AG04449 (cell line): ENCODE measurements at regions of chr4 and their contacts with region 1.

Region 1: DNA sequence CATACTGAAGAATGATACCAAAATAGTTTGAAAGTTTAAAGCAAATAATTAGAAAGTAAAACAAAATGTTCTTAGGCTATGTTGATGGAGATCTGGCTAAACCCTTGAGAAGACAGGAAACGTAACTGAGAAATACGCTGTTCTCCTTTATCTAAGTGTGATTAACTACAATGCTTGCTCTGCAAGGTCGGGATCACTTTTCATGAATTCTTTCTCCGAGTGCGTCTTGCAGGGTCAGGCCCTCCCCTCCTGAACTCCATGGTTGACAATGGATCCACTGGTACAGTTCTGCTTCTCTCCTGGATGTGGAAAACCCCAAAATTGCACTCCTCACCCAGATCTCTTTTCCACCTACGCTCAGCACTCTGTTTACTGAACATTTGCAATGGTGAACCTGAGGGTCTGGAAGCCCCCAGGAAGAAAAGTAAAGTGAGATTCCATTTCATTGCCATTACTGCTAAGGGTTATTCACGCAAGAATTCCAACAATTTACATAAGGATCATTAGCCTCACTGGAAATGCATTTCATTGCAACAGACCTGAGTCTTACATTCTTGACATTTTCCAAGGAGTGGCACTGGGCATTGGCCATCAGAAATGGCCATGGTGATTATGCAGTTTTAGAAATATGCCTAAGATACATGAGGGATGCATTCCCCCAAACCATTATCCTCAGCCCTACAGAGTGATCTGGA is 24.6 kb upstream of the WWC2 start:
- DNase-seq: no peak
- H3K4me3 ChIP-seq: no peak overlapping the region
- CTCF ChIP-seq: no peak

Region 2: DNA sequence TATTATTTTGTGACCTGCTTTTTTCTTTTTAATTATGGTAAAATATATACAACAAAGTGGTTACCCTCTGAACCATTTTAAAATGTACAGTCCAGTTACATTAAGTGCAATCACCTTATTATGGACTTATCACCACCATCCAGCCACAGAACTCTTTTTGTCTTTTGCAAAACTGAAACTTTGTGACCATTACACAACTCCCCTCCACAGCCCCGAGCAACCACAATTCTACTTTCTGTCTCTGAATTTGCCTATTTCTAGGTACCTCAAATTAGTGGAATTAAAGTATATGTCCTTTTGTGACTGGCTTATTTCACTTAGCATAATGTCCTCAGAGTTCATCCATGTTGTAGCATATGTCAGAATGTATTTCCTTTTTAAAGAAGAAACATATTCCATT is 14.6 kb before region 1 on chr4:
- CTCF ChIA-PET with region 1: interaction called, 39 read pairs
- POLR2A ChIA-PET with region 1: no interaction called
- DNase-seq: no peak
- H3K4me3 ChIP-seq: no peak overlapping the region
- CTCF ChIP-seq: no peak

Region 3: DNA sequence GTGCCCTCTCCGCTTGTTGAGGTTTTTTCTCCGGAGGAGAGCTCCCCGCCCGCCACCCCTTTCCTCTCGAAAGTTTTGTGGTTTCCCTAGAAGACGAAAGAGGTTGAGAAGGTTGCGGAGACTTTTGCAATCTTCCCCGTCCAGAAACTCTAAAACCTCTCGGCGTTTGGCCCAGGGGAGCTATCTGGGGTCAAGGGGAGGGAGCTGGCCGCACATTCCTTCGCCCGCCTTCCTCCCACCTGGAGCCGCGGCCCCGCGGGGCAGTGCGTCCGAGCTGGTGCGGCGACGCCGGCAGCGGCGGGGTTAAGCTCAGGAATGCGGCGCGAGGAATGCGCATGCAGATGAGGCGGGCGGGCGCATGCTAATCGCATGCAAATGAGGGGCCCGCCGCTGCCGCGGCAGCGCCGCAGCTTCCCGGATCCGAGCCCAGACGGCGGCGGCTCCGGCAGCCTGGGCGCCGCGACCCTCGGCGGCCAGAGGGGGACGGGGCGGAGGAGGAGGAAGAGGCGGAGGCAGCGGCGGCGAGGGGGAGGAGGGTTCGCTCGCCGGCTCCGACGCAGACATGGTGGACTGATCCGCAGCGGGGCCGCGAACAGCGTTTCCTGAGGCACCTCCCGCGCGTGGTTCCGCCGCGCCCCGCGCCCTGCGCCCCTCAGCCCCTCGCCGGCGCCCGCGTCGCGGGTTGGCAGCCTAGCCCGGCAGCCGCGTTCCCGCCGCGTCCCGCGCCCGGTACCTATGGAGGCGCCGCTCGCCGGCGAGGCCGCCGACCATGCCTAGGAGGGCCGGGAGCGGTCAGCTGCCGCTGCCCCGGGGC is 24.5 kb after region 1 on chr4 and contains the start of gene WWC2:
- CTCF ChIA-PET with region 1: interaction called, 43 read pairs
- POLR2A ChIA-PET with region 1: interaction called, 3 read pairs
- DNase-seq: peak; percentile 41
- H3K4me3 ChIP-seq: peak within 1 kb of the TSS; percentile 94
- CTCF ChIP-seq: peak; percentile 7

Region 4: DNA sequence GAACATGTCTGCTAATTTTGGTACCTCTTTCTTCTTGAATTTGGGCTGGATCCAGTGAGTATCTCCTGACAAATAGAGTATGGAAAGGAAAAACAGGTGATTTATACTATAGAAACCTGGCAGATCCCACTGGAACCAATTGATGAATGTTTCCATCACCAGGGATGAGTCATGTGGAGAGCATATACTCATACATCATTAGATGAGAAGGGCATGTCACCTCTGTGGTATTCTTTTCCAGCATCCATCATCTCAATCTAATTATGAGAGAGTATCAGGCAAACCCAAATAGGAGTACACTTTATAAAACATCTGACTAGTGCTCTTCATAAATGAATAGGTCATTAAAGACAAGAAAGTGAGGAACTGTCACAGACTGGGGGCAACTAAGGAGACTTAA is 155.0 kb after region 1 on chr4:
- CTCF ChIA-PET with region 1: interaction called, 14 read pairs
- POLR2A ChIA-PET with region 1: no interaction called
- DNase-seq: no peak
- H3K4me3 ChIP-seq: no peak overlapping the region
- CTCF ChIP-seq: no peak

Region 5: GRCh38 chr4:183241322-183241640 is 166.8 kb after region 1 on chr4:
- CTCF ChIA-PET with region 1: interaction called, 47 read pairs
- POLR2A ChIA-PET with region 1: no interaction called
- DNase-seq: peak; percentile 26
- H3K4me3 ChIP-seq: no peak overlapping the region
- CTCF ChIP-seq: no peak